Testis (tissue), 5 donors: ENCODE measurements at regions of chr15 and their contacts with region 1.

Region 1: GRCh38 chr15:98779463-98780071 is 131.2 kb downstream of the IGF1R start:
- DNase-seq: peak; percentile 84
- H3K4me3 ChIP-seq: no peak overlapping the region
- H3K27ac ChIP-seq: peak overlapping the region in 1 of 2 donors; percentile 77
- H3K4me1 ChIP-seq: peaks cover 40% of the 10 kb centered on the region
- H3K27me3 ChIP-seq: no peaks in the 10 kb centered on the region
- CTCF ChIP-seq: peak; percentile 64 to 70 (median 69)
- POLR2A ChIP-seq: no peak

Region 2: GRCh38 chr15:98719137-98719740 is 60.3 kb before region 1 on chr15:
- intact Hi-C with region 1: no loop called
- DNase-seq: no peak
- H3K4me3 ChIP-seq: no peak overlapping the region
- H3K27ac ChIP-seq: no peak overlapping the region
- H3K4me1 ChIP-seq: peaks cover 22% of the 10 kb centered on the region
- H3K27me3 ChIP-seq: no peaks in the 10 kb centered on the region
- CTCF ChIP-seq: no peak
- POLR2A ChIP-seq: no peak

Region 3: GRCh38 chr15:98845107-98845884 is 65.7 kb after region 1 on chr15:
- intact Hi-C with region 1: loop called (anchors 5 kb)
- DNase-seq: peak; percentile 37
- H3K4me3 ChIP-seq: no peak overlapping the region
- H3K27ac ChIP-seq: peak overlapping the region; percentile 4 to 34
- H3K4me1 ChIP-seq: peaks cover 19% of the 10 kb centered on the region
- H3K27me3 ChIP-seq: no peaks in the 10 kb centered on the region
- CTCF ChIP-seq: no peak
- POLR2A ChIP-seq: no peak

Region 4: GRCh38 chr15:98914626-98915025 is 135.1 kb after region 1 on chr15:
- intact Hi-C with region 1: no loop called
- DNase-seq: no peak
- H3K4me3 ChIP-seq: no peak overlapping the region
- H3K27ac ChIP-seq: no peak overlapping the region
- H3K4me1 ChIP-seq: no peaks in the 10 kb centered on the region
- H3K27me3 ChIP-seq: no peaks in the 10 kb centered on the region
- CTCF ChIP-seq: no peak
- POLR2A ChIP-seq: no peak